ENCODE measurements at regions of chr7 and their contacts with region 1.

Region 1: DNA sequence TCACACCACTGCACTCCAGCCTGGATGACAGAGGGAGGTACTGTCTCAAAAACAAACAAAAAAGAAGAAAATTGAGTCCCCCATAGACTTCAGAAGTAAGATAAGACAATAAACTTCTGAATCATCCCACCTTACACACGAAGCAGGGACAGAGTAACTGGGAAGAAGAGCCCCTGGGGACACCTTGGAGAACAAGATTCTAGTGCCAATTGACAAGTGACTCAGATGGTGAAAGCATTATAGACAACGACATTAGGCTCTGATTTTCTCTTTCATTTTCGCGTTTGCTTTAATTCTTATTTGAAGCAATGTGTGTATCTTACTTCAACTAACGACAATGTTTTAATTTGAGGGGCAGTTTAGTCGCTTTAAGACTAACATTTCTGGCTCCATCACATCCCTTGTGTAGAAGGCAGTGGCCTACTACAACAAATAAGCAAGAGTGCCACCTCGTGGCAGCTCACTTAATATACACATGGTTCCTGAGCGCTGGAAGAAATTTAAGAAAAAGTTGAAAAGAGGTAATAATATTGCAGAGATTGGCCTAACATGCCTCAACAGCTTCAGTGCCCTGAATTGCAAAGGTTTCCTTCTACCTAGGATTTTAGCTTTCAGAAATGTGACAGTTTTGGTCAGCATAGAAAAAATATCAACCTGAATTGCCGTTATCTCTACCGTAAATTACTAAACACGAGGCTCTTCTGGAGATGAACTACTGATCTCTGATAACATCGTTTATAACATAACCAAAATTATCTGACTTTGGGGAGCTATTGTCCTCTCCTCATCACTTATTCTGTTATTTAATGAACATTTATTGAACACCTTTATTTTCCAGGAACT is 36.7 kb downstream of the ASNS start:
- DNase-seq: peak; percentile 50
- ATAC-seq: peak; percentile 94
- H3K4me3 ChIP-seq: no peak overlapping the region
- H3K27ac ChIP-seq: no peak overlapping the region
- H3K4me1 ChIP-seq: no peaks in the 10 kb centered on the region
- H3K27me3 ChIP-seq: peaks cover 23% of the 10 kb centered on the region
- CTCF ChIP-seq: peak; percentile 63 to 80 (median 69)
- POLR2A ChIP-seq: no peak
- RAD21 ChIP-seq: peak; percentile 82

Region 2: DNA sequence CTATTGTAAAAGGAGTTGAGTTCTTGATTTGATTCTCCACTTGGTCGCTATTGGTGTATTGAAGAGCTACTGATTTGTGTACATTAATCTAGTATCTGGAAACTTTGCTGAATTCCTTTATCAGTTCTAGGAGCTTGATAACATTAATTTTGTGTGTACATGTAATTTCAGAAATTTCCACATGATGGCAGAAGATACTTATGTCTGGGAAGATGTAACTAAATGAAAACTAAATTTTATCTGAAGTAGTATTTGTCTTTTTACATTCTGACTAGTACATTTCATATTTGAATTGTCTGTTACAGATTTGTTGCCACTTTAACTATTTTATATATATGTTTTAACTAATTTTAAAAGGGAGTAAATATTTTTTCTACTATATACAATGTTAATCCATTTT is 690.4 kb before region 1 on chr7:
- CTCF ChIA-PET with region 1: interaction called, 8 read pairs
- POLR2A ChIA-PET with region 1: no interaction called
- RAD21 ChIA-PET with region 1: no interaction called
- intact Hi-C with region 1: loop called (anchors 1 kb)
- DNase-seq: no peak
- ATAC-seq: no peak
- H3K4me3 ChIP-seq: no peak overlapping the region
- H3K27ac ChIP-seq: no peak overlapping the region
- H3K4me1 ChIP-seq: no peaks in the 10 kb centered on the region
- H3K27me3 ChIP-seq: no peaks in the 10 kb centered on the region
- CTCF ChIP-seq: peak in 2 of 3 experiments; percentile 47 to 59; a peak in 3 of 6 replicates
- POLR2A ChIP-seq: no peak
- RAD21 ChIP-seq: peak; percentile 64

Region 3: GRCh38 chr7:97317575-97317974 is 517.9 kb before region 1 on chr7:
- CTCF ChIA-PET with region 1: no interaction called
- POLR2A ChIA-PET with region 1: no interaction called
- RAD21 ChIA-PET with region 1: no interaction called
- intact Hi-C with region 1: loop called (anchors 10 kb)
- DNase-seq: no peak
- ATAC-seq: no peak
- H3K4me3 ChIP-seq: no peak overlapping the region
- H3K27ac ChIP-seq: no peak overlapping the region
- H3K4me1 ChIP-seq: no peaks in the 10 kb centered on the region
- H3K27me3 ChIP-seq: peaks cover 12% of the 10 kb centered on the region
- CTCF ChIP-seq: 0 out of 6 replicates have a peak, but pooled peaks of 1 of the 3 experiments have one; percentile 4
- POLR2A ChIP-seq: no peak
- RAD21 ChIP-seq: peak; percentile 40

Region 4: DNA sequence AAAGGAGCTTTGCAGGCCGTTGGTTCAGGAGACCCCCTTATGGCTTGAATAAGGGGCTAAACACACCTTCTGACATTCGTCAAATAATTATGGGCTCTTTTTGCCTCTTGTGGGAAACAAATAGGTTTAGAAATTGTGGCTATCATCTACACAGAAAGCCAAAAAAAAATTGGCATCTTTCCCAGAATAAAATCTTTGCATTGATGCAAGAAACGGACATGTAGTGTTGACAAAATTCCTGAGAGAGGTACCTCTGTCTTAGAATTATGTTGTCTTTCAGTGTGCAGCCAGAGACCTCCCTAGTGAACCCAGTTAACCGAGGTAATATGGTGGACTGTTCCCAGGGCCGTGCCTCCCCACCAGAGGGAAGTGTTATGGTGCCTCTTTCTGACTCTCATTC is 434.1 kb before region 1 on chr7:
- CTCF ChIA-PET with region 1: interaction called, 4 read pairs
- POLR2A ChIA-PET with region 1: no interaction called
- RAD21 ChIA-PET with region 1: no interaction called
- intact Hi-C with region 1: loop called (anchors 10 kb)
- DNase-seq: no peak
- ATAC-seq: no peak
- H3K4me3 ChIP-seq: no peak overlapping the region
- H3K27ac ChIP-seq: no peak overlapping the region
- H3K4me1 ChIP-seq: no peaks in the 10 kb centered on the region
- H3K27me3 ChIP-seq: peaks cover 48% of the 10 kb centered on the region
- CTCF ChIP-seq: no peak
- POLR2A ChIP-seq: no peak
- RAD21 ChIP-seq: no peak

Region 5: DNA sequence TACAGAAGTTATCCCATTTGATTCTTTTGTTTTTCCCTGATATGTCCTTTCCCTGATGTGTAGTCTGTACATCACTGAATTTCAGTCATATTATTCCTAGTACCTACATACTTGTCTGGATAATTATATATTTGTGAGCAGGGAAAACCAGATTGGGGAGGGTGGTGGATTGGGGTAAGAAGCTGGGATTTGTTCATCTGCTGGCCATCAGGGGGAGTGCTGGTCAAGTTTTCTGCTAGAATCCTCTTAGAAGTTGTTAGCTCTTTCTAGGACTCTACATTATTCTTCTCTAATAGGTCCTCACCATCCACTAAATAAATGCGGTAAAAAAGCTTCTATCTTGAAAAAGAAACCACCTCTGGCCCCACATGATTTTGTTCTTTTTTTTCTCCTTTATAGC is 336.3 kb before region 1 on chr7:
- CTCF ChIA-PET with region 1: interaction called, 14 read pairs
- POLR2A ChIA-PET with region 1: no interaction called
- RAD21 ChIA-PET with region 1: no interaction called
- intact Hi-C with region 1: loop called (anchors 1 kb)
- DNase-seq: peak; percentile 29
- ATAC-seq: peak; percentile 80
- H3K4me3 ChIP-seq: no peak overlapping the region
- H3K27ac ChIP-seq: no peak overlapping the region
- H3K4me1 ChIP-seq: no peaks in the 10 kb centered on the region
- H3K27me3 ChIP-seq: no peaks in the 10 kb centered on the region
- CTCF ChIP-seq: peak; percentile 28 to 65 (median 59); a peak in 5 of 6 replicates
- POLR2A ChIP-seq: no peak
- RAD21 ChIP-seq: peak; percentile 66

Region 6: DNA sequence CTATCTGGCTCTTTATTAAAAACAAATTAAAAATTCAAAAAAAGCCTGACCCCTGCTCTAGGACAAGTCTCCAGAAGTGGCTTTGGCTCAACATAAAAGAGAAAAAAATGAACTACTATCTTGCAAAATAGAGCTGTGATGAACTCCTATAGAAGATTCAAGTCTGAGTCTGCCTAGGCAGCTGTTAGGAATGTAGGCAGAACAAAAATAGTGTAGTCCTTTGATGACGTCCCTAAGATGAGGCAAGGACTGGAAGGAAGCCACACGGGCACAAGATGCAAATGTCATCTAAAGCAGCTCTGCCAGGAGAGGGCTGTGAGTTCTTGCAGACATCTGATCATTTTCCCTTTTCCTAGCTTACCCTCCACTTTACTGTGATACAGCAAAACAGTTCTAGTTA is 16.2 kb after region 1 on chr7:
- CTCF ChIA-PET with region 1: interaction called, 3 read pairs
- POLR2A ChIA-PET with region 1: no interaction called
- RAD21 ChIA-PET with region 1: no interaction called
- intact Hi-C with region 1: loop called (anchors 2 kb)
- DNase-seq: no peak
- ATAC-seq: no peak
- H3K4me3 ChIP-seq: no peak overlapping the region
- H3K27ac ChIP-seq: no peak overlapping the region
- H3K4me1 ChIP-seq: no peaks in the 10 kb centered on the region
- H3K27me3 ChIP-seq: no peaks in the 10 kb centered on the region
- CTCF ChIP-seq: no peak
- POLR2A ChIP-seq: no peak
- RAD21 ChIP-seq: no peak

Measured in HCT116 (cell line).